ENCODE measurements at regions of chr10 and their contacts with region 1.

Region 1: DNA sequence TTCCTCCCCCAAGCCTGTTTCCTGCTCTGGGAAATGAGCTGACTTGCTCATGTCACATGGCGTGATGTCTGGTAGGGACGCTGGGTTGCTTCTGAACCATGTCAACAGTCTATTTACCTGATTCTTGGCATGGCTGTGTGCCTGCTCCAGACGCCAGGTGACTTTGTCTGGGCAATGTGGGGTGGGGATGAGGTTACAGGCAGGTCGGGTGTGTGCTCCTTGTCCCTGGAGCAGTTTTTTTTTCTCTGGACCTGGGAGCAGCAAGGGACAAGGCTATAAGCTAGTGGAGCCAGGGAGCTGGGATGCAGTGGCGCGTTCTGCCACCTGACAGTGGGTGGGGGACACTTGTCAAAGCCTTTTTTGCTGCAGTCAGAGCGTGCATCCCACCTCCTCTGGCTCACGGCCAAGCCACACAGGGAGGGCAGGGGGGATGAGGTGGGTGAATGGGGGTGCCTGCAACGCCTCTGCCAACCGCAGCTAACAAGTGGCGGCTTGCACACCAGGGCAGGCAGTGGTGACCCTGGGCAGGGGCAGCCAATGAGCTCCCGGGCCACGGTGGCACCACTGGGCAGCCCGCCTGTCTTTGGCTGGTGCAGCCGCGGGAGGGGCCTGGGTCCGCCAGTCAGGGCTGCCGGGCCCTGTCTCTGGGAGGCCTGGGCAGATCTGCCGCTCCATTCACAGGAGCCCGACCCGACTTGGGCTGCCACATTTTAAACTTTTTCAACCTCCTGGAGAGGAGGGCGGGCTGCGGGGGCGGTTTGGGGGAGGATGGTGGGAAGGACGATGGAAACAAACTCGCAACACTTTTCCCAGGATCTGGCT is 22.9 kb downstream of the DNAJB12 start:
- DNase-seq: peak; percentile 92

Region 2: DNA sequence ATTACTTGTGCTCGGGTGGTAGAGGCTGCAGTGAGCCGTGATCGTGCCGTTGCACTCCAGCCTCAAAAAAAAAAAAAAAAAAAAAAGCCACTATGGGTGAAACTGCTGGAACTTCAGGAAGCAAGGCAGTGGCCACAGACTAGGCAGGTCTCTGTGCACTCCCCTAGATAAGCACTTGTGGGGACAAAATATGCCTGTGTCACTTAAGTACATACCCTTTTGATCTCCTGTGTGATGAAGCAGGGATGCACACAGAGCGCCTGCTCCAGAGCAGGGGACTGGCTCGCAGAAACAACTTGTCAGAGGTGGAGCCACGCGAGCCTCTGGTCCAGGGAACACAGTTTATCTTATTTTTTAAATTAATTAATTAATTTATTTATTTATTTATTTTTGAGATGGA is 437.9 kb before region 1 on chr10:
- intact Hi-C with region 1: loop called (anchors 10 kb)
- DNase-seq: no peak

Region 3: DNA sequence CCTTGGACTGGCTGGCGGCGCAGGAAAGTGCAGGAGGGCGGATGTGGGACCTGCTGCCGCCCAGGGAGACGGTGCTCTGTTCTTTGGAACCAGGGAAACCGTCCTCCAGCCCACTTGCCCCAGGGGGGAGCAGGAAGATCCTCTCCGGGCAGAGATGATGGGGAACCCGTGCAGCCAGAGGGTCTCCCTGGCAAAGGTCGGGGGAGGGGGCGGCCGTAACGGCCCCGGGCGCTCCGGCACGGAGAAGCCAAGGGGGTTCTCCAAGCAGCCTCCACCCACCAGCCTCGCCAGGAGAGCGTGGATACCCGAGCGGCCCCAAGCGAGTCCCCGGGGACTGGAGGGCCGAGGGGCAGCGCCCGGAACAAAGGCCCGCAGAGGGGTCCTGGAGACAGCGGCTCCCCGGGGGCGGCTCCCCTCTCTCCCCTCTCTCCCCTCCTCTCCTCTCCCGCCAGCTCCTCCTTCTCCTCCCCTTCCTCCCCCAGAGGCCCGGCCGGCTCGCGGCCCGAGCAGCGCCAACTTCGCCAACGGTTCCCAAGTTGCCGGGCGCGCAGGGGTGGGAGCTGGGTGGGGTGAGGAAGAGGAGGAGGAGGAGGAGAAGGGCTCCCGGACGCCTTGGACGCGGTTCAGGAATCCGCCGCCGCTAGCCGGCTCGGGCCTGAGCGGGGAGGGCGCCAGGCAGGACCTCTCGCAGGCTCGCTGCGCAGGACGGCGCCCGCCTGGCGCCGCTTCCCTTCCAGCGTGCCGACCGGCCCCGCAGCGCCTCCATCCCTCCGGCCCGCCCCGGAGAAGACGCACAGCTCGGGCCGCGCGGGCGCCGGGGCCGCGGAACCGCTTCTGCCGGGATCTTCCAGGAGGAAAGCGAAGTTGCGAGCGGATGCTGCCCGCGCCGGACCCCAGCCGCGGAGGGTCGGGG is 367.8 kb before region 1 on chr10 and contains the start of gene CHST3:
- intact Hi-C with region 1: loop called (anchors 5 kb)
- DNase-seq: peak; percentile 90
- total RNA-seq, gene CHST3: 24.4 TPM

Region 4: DNA sequence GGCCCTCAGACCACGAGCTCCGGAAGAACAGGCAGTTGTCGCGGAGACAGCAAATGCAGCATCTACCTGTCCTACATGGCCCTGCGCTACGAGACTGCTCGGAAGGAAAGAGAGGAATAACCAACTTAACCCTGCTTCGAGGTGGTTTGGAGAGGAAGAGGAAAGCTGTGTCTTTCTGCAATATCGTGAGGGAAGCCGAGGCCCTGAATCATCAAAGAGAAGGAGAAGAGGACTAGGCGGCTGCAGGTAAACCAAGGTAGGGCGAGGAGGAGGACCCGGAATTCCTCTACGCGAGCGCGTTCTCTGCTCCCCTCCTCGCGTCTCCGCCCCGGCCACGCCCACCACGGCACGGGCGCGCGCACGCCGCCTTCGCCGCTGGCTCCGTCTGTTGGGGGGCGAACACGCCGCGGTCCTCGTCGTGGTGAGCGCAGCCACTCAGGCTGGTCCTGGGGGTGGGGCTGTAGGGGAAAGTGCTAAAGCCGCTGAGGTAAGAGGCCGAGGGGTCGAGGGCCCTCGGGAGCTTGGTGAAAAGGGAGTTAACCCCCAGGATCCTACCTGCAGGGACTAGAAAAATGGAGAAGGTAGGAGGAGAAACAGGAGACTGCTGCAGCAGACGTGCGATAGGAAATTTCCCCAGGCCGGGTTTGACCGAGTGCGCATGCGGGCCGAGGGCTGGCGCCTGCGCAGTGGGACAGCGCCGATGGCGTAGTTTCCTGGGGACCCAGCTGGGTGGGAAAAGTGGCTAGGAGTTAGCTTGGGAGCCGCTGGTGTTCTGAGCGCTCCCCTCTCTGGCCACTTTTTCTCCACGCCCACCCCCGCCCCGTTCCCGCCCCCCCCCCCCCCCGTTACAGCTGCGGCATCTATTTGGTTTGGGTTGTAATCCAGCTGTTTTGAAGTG is 115.9 kb before region 1 on chr10 and contains the starts of genes ANAPC16 and ASCC1:
- intact Hi-C with region 1: loop called (anchors 2 kb)
- DNase-seq: peak; percentile 95
- total RNA-seq, gene ANAPC16: 171 TPM
- total RNA-seq, gene ASCC1: 21.2 TPM